Endothelial cell of umbilical vein (primary cell): ENCODE measurements at regions of chr16 and their contacts with region 1.

Region 1: DNA sequence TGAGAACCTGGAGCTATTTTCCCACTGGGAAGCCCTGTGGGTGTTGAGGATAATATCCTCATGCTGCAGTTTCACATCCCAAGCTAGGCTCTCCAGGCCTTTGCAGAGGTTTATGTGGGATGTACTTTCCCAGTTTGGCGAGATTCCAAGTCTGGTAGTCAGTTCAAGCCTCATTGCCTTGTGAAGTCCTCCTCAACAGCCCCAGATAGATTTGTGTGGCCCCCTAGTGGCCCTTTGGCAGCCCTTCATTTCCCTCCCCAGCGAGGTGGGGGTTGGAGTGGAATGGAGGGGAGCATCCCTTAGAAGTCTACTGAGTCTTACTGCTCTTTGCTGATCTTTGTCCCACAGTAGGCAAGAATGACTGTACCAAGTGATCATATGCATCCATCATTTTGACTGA is 137.9 kb downstream of the CDH11 start:
- DNase-seq: peak; percentile 80
- H3K4me3 ChIP-seq: no peak overlapping the region
- H3K27ac ChIP-seq: no peak overlapping the region
- H3K4me1 ChIP-seq: no peaks in the 10 kb centered on the region
- H3K27me3 ChIP-seq: no peaks in the 10 kb centered on the region
- CTCF ChIP-seq: peak; percentile 74 to 79
- POLR2A ChIP-seq: no peak

Region 2: DNA sequence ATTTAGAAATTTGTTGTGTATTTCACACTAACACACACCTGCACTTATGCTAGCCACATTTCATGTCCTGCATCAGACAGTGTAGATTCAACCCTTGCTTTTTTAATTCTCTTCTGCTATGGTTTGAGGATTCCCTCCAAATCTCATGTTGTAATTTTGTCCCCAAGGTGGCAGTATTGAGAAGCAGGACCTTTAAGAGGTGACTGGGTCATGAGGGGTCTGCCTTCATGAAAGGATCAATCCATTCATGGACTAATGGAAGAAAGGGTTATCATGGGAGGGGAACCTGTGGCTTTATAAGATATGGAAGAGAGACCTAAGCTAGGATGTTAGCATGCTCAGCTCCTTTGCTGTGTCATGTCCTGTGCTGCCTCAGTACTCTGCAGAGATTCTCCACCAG is 894.3 kb before region 1 on chr16:
- CTCF ChIA-PET with region 1: no interaction called
- POLR2A ChIA-PET with region 1: no interaction called
- dilution Hi-C with region 1: no loop called
- intact Hi-C with region 1: loop called (anchors 1 kb)
- DNase-seq: peak; percentile 55
- H3K4me3 ChIP-seq: no peak overlapping the region
- H3K27ac ChIP-seq: no peak overlapping the region
- H3K4me1 ChIP-seq: no peaks in the 10 kb centered on the region
- H3K27me3 ChIP-seq: no peaks in the 10 kb centered on the region
- CTCF ChIP-seq: peak; percentile 34 to 40
- POLR2A ChIP-seq: no peak

Region 3: GRCh38 chr16:64397945-64398508 is 585.9 kb before region 1 on chr16:
- CTCF ChIA-PET with region 1: no interaction called
- POLR2A ChIA-PET with region 1: no interaction called
- dilution Hi-C with region 1: no loop called
- intact Hi-C with region 1: loop called (anchors 5 kb)
- DNase-seq: peak; percentile 75
- H3K4me3 ChIP-seq: peak overlapping the region in 1 of 3 experiments; percentile 5
- H3K27ac ChIP-seq: peak overlapping the region; percentile 78
- H3K4me1 ChIP-seq: peaks cover 44% of the 10 kb centered on the region
- H3K27me3 ChIP-seq: no peaks in the 10 kb centered on the region
- CTCF ChIP-seq: no peak
- POLR2A ChIP-seq: peak; percentile 22

Region 4: GRCh38 chr16:64948056-64948455 is 35.9 kb before region 1 on chr16:
- CTCF ChIA-PET with region 1: no interaction called
- POLR2A ChIA-PET with region 1: no interaction called
- dilution Hi-C with region 1: no loop called
- intact Hi-C with region 1: loop called (anchors 2 kb)
- DNase-seq: peak; percentile 55
- H3K4me3 ChIP-seq: no peak overlapping the region
- H3K27ac ChIP-seq: peak overlapping the region; percentile 30
- H3K4me1 ChIP-seq: peaks cover 14% of the 10 kb centered on the region
- H3K27me3 ChIP-seq: no peaks in the 10 kb centered on the region
- CTCF ChIP-seq: no peak
- POLR2A ChIP-seq: no peak